Heart left ventricle (tissue), 16 donors: ENCODE measurements at regions of chr5 and their contacts with region 1.

Region 1: DNA sequence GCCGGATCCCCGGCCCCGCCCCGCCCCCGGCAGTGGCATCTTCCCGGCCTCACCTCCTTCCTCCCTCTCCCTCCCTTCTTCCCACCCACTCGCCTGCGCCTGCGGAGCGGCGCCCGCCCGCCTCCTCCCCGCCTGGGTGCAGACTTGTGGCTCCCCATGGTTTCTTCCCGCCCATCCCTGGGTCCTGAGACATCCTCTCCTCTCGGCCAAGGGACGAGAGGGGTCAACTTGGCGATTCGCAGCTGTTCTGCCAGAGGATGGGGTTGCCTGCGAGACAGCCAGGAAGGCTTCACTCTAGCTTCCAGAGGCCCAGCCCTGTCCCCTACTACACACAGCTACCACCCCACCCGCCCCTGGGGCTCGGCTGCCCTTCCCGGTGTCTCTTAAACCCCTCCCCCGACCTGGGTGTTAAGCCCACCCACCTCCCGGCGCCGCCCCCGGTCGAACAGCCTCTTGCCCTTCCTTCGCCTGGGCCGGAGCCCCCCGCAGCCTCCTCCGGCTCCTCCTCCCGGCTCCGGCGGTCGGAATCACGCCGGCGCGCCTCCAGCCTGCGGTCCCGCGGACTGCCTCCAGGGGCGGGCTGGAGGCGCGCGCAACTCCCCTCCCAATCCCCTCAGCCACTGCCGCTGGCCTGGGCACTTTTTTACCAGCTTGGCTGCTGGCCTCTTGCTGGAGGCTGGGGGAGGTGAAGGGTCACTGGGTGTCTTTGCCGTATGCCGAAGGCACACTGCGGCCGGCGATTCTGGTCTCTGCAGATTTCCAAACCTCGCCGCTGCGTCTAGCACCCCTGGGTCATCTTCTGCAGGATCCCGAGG is 1.9 kb downstream of the JADE2 start:
- DNase-seq: peak; percentile 89 to 93 (median 90)
- ATAC-seq: peak; percentile 38 to 69 (median 69)
- H3K4me3 ChIP-seq: peak overlapping the region; percentile 62 to 98 (median 82)
- H3K27ac ChIP-seq: peak overlapping the region; percentile 94 to 100 (median 98)
- H3K4me1 ChIP-seq: peaks cover 6 to 58% (median 48%) of the 10 kb centered on the region in 12 donors
- H3K27me3 ChIP-seq: no peaks in the 10 kb centered on the region
- CTCF ChIP-seq: peak; percentile 68 to 99 (median 76)
- POLR2A ChIP-seq: peak in 1 of 2 donors; percentile 62

Region 2: DNA sequence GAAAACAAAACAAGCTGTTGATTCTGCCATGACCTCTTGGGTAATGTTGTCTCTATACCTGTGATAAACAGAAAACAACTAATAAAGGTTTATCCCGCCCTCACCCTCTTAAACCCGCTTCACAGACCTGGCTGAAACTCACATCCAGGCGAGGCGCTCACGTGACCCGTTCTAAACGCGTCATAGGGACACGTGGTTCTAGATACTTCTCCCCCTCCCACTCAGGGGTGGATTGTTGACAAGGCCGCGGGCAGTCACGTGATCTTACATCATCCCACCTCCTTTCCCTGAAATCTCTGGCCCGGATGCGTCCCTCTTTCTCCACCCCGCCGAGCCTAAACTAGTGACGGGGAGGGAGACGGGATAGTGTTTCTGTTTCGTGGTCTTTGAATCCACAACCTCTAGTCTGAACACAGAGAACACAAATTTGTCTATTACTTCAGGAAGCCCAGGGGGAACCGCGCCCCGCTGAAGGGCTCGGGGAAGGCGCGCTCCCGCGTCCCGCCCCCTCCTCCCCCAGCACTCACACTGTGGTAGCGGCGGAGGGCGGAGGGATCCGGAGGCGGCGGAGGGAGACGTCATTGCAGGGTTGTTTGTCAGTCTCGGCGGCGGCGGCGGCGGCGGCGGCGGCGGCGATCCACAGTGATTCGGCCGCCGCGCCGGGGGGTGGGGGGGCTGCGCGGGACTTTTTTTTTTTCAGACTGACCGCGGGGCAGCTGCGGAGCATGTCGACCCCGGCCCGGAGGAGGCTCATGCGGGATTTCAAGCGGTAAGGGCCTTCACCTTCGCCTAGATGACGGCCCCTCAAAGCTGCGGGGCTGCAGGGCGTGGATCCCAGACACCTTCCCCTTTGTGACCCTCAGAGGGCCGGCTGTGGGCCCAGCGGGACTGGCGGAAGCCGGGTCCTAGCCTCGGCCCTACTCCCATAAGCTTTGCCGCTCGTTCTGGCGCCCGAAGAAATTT is 156.2 kb before region 1 on chr5 and contains the start of gene UBE2B:
- intact Hi-C with region 1: loop called in 9 of 10 experiments (anchors 1 to 5 kb)
- DNase-seq: peak; percentile 97 to 99 (median 99)
- ATAC-seq: peak; percentile 92 to 94 (median 92)
- H3K4me3 ChIP-seq: peak within 1 kb of the TSS; percentile 70 to 99 (median 92)
- H3K27ac ChIP-seq: peak within 1 kb of the TSS; percentile 92 to 100 (median 99)
- H3K4me1 ChIP-seq: peaks cover 0 to 55% (median 29%) of the 10 kb centered on the region in 12 donors
- H3K27me3 ChIP-seq: no peaks in the 10 kb centered on the region
- CTCF ChIP-seq: no peak
- POLR2A ChIP-seq: peak in 1 of 2 donors; percentile 55
- total RNA-seq, gene UBE2B: 62.8 to 230 (median 188) TPM

Region 3: DNA sequence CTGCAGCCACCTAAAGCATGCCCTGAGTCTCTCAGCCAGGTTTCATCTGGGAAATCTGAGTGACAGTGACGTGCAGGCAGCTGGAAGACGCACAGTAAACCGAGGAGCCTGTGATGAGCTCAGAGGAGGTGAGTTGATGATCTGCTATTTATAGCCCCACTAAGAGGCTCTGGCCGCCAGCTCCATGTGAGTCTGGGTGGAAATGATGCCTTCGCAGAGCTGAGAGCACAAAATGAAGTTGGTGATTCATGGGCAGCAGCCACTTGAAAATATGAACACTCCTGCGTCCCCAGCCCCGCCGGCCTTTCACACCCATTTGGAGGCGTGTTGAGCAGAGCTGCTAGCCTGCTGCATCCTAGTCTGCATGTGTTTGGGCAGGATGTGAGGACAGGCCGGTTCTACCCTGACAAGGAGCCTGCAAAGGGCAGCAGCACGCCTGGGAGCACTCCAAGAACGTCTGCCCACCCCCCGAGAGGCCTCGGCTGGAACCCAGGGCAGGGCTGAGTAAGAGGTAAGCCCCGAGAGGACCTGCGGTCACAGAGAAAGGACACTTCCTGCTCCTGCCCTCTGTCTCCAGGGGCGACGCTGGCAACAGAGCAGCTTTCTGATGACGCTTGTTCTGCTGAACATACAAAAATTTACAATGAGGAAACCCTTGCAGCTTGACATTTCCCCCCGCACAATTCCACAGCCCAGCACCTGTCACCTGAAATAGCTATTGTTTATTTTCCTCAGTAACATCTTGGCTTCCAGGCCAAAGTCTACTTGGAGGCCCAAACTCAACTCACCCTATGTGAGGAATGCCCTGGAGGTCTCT is 90.6 kb before region 1 on chr5:
- intact Hi-C with region 1: loop called in 1 of 10 experiments (anchors 2 kb)
- DNase-seq: peak; percentile 46 to 90 (median 73)
- ATAC-seq: peak; percentile 74 to 89 (median 85)
- H3K4me3 ChIP-seq: peak overlapping the region in 5 of 12 donors; percentile 19 to 30 (median 24)
- H3K27ac ChIP-seq: peak overlapping the region; percentile 41 to 95 (median 84)
- H3K4me1 ChIP-seq: peaks cover 18 to 40% (median 37%) of the 10 kb centered on the region in 12 donors
- H3K27me3 ChIP-seq: no peaks in the 10 kb centered on the region
- CTCF ChIP-seq: no peak
- POLR2A ChIP-seq: no peak

Region 4: DNA sequence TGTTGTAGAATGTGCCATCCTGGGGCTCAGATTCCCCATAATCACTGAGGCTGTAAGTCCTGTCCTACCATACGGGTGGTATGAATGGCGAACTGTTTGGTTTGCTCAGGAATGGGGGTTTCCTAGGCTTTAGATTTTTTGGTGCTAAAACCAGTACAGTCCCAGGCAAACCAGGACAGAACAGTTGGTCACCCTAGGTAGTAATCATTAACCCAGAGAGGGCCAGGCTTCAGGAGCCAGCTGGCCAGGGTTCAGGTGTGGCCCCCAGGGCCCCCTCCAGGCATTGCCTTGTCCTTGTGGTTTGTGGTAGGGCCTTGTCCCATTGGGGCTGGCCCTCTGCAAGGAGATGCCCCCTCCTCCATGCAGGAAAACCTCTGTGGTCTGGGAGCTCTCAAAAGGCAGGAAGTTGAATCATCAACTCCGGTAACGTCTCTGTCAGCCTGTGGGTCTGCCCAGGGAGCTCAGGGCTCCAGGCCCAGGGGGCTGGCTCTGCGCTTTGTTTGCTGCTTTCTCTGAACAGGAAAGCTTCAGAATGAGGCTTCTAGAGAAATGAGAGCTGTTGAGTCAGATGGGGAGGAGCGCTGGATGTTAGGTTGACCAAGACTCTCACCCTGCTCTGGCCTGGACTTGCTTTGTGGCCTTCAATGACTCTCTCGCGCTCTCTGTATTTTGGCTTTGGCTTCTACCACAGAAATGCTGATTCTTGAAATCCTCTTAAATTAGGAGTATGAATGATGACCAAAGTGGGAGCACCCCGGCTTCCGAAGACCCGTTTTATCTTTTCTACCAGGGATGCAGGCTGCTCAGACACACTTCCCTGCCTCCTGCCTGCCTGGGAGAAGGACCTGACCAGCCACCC is 24.0 kb before region 1 on chr5:
- intact Hi-C with region 1: loop called in 1 of 10 experiments (anchors 2 kb)
- DNase-seq: peak; percentile 62 to 89 (median 69)
- ATAC-seq: peak; percentile 16 to 81 (median 78)
- H3K4me3 ChIP-seq: no peak overlapping the region
- H3K27ac ChIP-seq: peak overlapping the region; percentile 8 to 86 (median 76)
- H3K4me1 ChIP-seq: peaks cover 5 to 42% (median 27%) of the 10 kb centered on the region in 12 donors
- H3K27me3 ChIP-seq: no peaks in the 10 kb centered on the region
- CTCF ChIP-seq: no peak
- POLR2A ChIP-seq: peak in 1 of 2 donors; percentile 57

Region 5: DNA sequence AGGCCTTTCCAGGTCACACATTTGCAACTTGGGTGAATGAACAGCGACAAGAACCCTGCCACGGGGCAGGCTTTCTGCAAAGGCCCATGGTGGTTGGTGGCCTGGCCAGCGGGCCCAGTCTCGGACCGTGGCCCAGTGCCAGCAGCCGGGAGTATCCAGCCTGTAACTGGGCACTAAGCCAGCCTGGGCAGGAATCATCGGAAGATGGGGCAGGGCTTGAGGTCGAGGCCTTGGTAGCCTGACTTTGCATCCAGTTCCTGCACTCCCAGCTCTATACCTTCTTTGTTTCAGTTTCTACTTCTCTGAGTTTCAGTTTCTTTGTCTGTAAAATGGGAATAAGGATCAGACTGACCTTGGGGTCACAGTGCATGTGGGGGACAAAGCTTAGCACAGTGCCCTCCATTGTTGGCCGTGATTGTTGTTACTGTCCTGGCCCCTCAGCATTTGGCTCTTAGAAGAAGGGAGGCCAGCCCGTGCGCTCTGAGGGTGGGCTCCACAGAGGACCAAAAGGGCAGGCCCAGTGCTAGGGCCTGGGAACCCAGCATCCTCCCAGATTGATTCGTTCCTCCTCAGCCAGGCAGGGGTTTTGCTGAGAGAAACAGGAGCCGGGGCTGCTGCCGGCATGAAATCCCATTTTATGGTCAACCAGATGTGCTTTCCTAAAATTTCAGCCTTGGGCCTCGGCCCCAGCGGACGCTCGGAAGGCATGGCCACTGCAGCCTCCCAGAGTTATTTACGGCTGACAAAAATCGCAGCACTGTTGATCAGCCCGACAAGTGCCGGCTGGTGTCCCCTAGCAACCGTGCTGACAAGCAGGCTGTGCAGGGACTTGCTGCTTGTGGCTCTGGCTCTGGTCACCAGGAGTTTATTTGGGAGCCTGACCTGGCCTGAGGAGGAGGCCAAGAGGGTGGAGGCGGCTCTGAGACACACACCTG is 41.7 kb after region 1 on chr5:
- intact Hi-C with region 1: loop called in 3 of 10 experiments (anchors 2 to 5 kb)
- DNase-seq: peak; percentile 80 to 90 (median 90)
- ATAC-seq: peak; percentile 66 to 78 (median 73)
- H3K4me3 ChIP-seq: no peak overlapping the region
- H3K27ac ChIP-seq: peak overlapping the region; percentile 40 to 90 (median 83)
- H3K4me1 ChIP-seq: peaks cover 16 to 61% (median 41%) of the 10 kb centered on the region in 12 donors
- H3K27me3 ChIP-seq: no peaks in the 10 kb centered on the region
- CTCF ChIP-seq: no peak
- POLR2A ChIP-seq: no peak

Region 6: GRCh38 chr5:134648425-134649162 is 121.2 kb after region 1 on chr5 and contains the start of gene SEC24A:
- intact Hi-C with region 1: loop called in 1 of 10 experiments (anchors 5 kb)
- DNase-seq: peak; percentile 90 to 95 (median 93)
- ATAC-seq: peak; percentile 79 to 96 (median 96)
- H3K4me3 ChIP-seq: peak within 1 kb of the TSS; percentile 77 to 99 (median 90)
- H3K27ac ChIP-seq: peak within 1 kb of the TSS; percentile 89 to 99 (median 94)
- H3K4me1 ChIP-seq: peaks cover 0 to 53% (median 27%) of the 10 kb centered on the region in 12 donors
- H3K27me3 ChIP-seq: no peaks in the 10 kb centered on the region
- CTCF ChIP-seq: no peak
- POLR2A ChIP-seq: peak in 1 of 2 donors; percentile 84
- total RNA-seq, gene SEC24A: 6.7 to 15.7 (median 8.6) TPM

Region 7: GRCh38 chr5:135013947-135014570 is 486.7 kb after region 1 on chr5:
- intact Hi-C with region 1: no loop called
- DNase-seq: peak in 2 of 5 donors; percentile 28 to 42
- ATAC-seq: peak in 3 of 4 donors; percentile 59 to 78 (median 63)
- H3K4me3 ChIP-seq: no peak overlapping the region
- H3K27ac ChIP-seq: no peak overlapping the region
- H3K4me1 ChIP-seq: peaks cover 0 to 18% (median 0%) of the 10 kb centered on the region in 12 donors
- H3K27me3 ChIP-seq: no peaks in the 10 kb centered on the region
- CTCF ChIP-seq: no peak
- POLR2A ChIP-seq: no peak